Activated T-helper 1 cell treated with anti-CD3 and anti-CD28 coated beads, Interleukin-12 subunit alpha, Interleukin-12 subunit beta, Interleukin-2, Interleukin-4 antibody, amounts not matched to agents 30 ng/mL and 10 ng/mL and 1 ng/mL, durations not matched to agents 14 hours and 24 hours and 36 hours (primary cell): ENCODE measurements at regions of chr18 and their contacts with region 1.

Region 1: DNA sequence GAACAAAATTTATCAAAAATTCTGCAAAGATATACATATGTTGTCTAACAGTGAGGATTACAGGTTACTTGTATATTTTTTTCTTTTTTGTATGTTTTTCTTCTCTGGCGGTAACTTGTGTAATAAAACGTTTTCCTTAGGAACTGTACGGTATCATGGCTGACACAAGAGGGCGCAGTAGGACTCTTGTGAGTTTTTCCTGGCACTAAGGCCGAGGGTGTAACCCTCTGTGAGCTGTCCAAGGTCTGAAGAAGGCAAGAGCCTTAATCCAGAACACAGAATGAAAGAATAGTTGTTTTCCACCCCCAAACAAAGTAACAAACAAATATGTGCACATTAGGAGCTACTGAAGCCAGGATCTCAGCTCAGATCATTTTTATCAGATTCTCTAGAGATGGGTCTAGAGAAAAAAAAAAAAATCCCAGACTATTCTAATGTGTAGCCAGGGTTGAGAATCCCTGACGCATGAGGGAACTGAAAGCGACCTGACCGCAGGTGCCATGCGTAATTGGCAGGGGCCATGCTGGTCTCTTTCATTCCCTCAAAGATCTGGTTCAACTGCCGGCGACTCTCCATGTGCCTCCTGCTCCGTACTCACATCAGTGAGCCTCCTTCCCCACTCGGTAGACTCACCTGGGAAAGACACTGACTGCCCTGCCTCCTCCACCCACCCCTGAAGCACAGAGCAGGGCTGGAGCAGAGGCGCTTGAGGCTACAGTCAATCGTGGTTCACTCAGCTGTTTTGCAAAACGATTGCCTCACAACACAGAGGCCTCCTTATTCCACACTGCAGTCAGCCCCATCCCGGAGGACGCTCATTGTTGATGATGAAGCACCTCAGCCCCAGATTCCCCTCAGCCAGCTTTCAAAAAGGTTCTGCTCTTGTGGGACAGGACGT is 26.9 kb downstream of the TMEM200C start:
- DNase-seq: peak; percentile 14
- H3K4me3 Mint-ChIP-seq: no peak overlapping the region
- H3K27ac Mint-ChIP-seq: no peak overlapping the region
- H3K4me1 Mint-ChIP-seq: no peaks in the 10 kb centered on the region
- H3K27me3 Mint-ChIP-seq: no peaks in the 10 kb centered on the region

Region 2: DNA sequence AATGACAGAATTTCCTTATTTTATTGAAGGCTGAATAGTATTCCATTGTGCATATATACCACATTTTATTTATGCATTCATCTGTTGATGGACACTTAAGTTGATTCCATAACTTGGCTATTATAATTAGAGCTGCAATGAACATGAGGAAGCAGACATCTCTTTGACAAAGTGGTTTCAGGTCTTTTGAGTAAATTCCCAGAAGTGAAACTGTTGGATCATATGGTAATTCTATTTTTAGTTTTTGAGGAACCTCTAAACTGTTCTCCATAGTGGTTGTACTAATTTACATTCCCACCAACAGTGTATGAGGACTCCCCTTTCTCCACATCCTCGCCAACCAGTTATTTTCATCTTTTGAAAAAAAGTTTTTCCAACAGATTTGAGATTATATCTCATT is 50.7 kb before region 1 on chr18:
- intact Hi-C with region 1: no loop called
- DNase-seq: no peak
- H3K4me3 Mint-ChIP-seq: no peak overlapping the region
- H3K27ac Mint-ChIP-seq: no peak overlapping the region
- H3K4me1 Mint-ChIP-seq: no peaks in the 10 kb centered on the region
- H3K27me3 Mint-ChIP-seq: no peaks in the 10 kb centered on the region

Region 3: GRCh38 chr18:5951515-5952091 is 83.1 kb after region 1 on chr18:
- intact Hi-C with region 1: no loop called
- DNase-seq: no peak
- H3K4me3 Mint-ChIP-seq: no peak overlapping the region
- H3K27ac Mint-ChIP-seq: no peak overlapping the region
- H3K4me1 Mint-ChIP-seq: no peaks in the 10 kb centered on the region
- H3K27me3 Mint-ChIP-seq: peaks cover 5% of the 10 kb centered on the region

Region 4: GRCh38 chr18:6022089-6022444 is 153.6 kb after region 1 on chr18:
- intact Hi-C with region 1: no loop called
- DNase-seq: no peak
- H3K4me3 Mint-ChIP-seq: no peak overlapping the region
- H3K27ac Mint-ChIP-seq: no peak overlapping the region
- H3K4me1 Mint-ChIP-seq: peaks cover 10% of the 10 kb centered on the region
- H3K27me3 Mint-ChIP-seq: no peaks in the 10 kb centered on the region

Region 5: GRCh38 chr18:6885992-6886796 is 1017.7 kb after region 1 on chr18:
- intact Hi-C with region 1: loop called (anchors 2 kb)
- DNase-seq: no peak
- H3K4me3 Mint-ChIP-seq: no peak overlapping the region
- H3K27ac Mint-ChIP-seq: no peak overlapping the region
- H3K4me1 Mint-ChIP-seq: no peaks in the 10 kb centered on the region
- H3K27me3 Mint-ChIP-seq: no peaks in the 10 kb centered on the region